ENCODE measurements at regions of chr15 and their contacts with region 1.

Region 1: DNA sequence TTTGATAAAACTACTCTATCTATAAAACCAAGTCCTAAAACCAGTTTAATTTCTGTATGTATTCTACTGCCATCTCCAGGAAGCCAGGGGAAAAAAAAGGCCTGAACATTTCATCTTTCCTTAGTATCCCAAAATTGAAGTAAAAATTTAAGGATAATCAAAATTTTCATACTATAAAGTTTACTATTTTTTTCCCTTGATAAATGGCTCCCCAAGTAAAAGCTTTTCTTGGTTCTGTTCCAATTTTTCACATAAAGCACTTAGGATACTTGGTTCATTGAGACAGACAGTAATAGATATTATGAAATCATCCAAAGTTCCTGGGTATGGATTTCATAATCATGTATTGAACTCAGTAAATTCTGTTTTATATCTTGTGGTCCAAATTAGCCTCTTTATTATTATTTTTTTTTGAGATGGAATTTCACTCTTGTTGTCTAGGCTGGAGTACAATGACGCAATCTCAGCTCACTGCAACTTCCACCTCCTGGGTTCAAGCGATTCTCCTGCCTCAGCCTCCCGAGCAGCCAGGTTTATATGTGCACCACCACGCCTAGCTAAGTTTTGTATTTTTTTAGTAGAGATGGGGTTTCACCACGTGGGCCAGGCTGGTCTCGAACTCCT is 34.5 kb downstream of the ICE2 start:
- DNase-seq: no peak
- H3K4me3 ChIP-seq: no peak overlapping the region
- CTCF ChIP-seq: no peak
- POLR2A ChIP-seq: no peak

Region 2: GRCh38 chr15:60358935-60359682 is 85.3 kb before region 1 on chr15:
- intact Hi-C with region 1: loop called (anchors 10 kb)
- DNase-seq: no peak
- H3K4me3 ChIP-seq: no peak overlapping the region
- CTCF ChIP-seq: no peak
- POLR2A ChIP-seq: no peak